ENCODE measurements at regions of chr16 and their contacts with region 1.

Region 1: GRCh38 chr16:2867987-2868789 is 10.2 kb upstream of the PRSS22 start:
- DNase-seq: peak; percentile 93
- H3K4me3 ChIP-seq: peak overlapping the region in 2 of 3 experiments; percentile 34 to 45
- H3K27ac ChIP-seq: peak overlapping the region; percentile 81
- H3K4me1 ChIP-seq: peaks cover 5% of the 10 kb centered on the region
- H3K27me3 ChIP-seq: peaks cover 0 to 2% of the 10 kb centered on the region in 2 experiments
- CTCF ChIP-seq: peak; percentile 99
- POLR2A ChIP-seq: peak; percentile 76

Region 2: GRCh38 chr16:2720719-2721633 is 147.2 kb before region 1 on chr16:
- CTCF ChIA-PET with region 1: interaction called, 3 read pairs
- POLR2A ChIA-PET with region 1: no interaction called
- dilution Hi-C with region 1: no loop called
- intact Hi-C with region 1: loop called (anchors 2 kb)
- DNase-seq: peak; percentile 64
- H3K4me3 ChIP-seq: peak overlapping the region; percentile 38 to 62 (median 55)
- H3K27ac ChIP-seq: peak overlapping the region; percentile 41
- H3K4me1 ChIP-seq: peaks cover 4% of the 10 kb centered on the region
- H3K27me3 ChIP-seq: peaks cover 0 to 4% of the 10 kb centered on the region in 2 experiments
- CTCF ChIP-seq: peak; percentile 29 to 61
- POLR2A ChIP-seq: peak; percentile 53

Region 3: GRCh38 chr16:2817340-2818007 is 50.7 kb before region 1 on chr16:
- CTCF ChIA-PET with region 1: no interaction called
- POLR2A ChIA-PET with region 1: no interaction called
- dilution Hi-C with region 1: no loop called
- intact Hi-C with region 1: no loop called
- DNase-seq: no peak
- H3K4me3 ChIP-seq: no peak overlapping the region
- H3K27ac ChIP-seq: no peak overlapping the region
- H3K4me1 ChIP-seq: no peaks in the 10 kb centered on the region
- H3K27me3 ChIP-seq: no peaks in the 10 kb centered on the region
- CTCF ChIP-seq: no peak
- POLR2A ChIP-seq: no peak

Region 4: GRCh38 chr16:2848933-2849725 is 19.1 kb before region 1 on chr16:
- CTCF ChIA-PET with region 1: interaction called, 15 read pairs
- POLR2A ChIA-PET with region 1: no interaction called
- dilution Hi-C with region 1: no loop called
- intact Hi-C with region 1: loop called (anchors 1 kb)
- DNase-seq: no peak
- H3K4me3 ChIP-seq: no peak overlapping the region
- H3K27ac ChIP-seq: no peak overlapping the region
- H3K4me1 ChIP-seq: no peaks in the 10 kb centered on the region
- H3K27me3 ChIP-seq: peaks cover 0 to 2% of the 10 kb centered on the region in 2 experiments
- CTCF ChIP-seq: no peak
- POLR2A ChIP-seq: no peak

Region 5: DNA sequence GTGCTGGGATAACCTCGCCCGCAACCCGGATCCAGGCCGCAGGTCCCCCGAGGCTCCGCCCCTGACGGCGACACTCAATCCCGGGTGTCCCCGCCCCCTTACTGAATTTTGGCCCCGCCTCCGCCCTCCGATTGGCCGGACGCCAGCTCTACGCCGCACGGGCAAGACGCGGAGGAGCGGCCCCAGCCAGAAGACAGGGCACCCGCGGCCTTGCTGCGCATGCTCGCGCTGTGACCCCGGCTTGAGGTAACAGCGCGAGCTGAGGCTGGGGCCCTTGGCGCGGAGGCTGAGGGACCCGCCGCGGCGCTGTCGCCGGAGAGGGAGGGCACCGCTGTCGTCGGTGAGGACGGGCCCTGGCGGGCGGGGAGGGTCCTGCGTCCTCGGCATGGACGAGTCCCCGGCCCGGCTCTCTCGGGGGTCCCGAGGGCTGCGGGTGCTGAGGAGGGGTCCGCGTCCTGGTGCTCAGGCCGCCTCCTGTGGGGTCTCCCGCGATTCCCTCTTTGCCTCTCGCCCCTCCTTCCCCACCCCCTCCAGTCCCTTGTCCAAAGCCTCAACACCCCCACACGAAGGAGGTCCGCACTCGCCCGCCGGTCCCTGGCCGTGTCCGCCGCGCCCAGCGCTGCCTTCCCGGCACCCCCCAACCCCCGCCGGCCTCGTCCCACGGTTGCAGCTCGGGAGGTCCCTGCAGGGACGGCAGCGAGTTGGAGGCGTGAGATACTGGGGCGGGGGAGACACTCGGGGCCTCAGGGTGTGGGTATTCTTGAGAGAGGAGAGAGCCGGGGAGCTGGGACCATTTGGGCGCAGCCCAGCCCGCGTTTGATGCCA is 15.1 kb after region 1 on chr16 and contains the start of gene FLYWCH2:
- CTCF ChIA-PET with region 1: interaction called, 11 read pairs
- POLR2A ChIA-PET with region 1: interaction called, 3 read pairs
- dilution Hi-C with region 1: no loop called
- intact Hi-C with region 1: no loop called
- DNase-seq: peak; percentile 99
- H3K4me3 ChIP-seq: peak within 1 kb of the TSS; percentile 42 to 91 (median 63)
- H3K27ac ChIP-seq: peak within 1 kb of the TSS; percentile 49
- H3K4me1 ChIP-seq: peaks cover 7% of the 10 kb centered on the region
- H3K27me3 ChIP-seq: no peaks in the 10 kb centered on the region
- CTCF ChIP-seq: no peak
- POLR2A ChIP-seq: peak; percentile 83
- total RNA-seq, gene FLYWCH2: 18.3 and 24.1 TPM in 2 replicates

Region 6: GRCh38 chr16:2919511-2920255 is 51.5 kb after region 1 on chr16:
- CTCF ChIA-PET with region 1: interaction called, 12 read pairs
- POLR2A ChIA-PET with region 1: no interaction called
- dilution Hi-C with region 1: no loop called
- intact Hi-C with region 1: no loop called
- DNase-seq: peak; percentile 74
- H3K4me3 ChIP-seq: no peak overlapping the region
- H3K27ac ChIP-seq: no peak overlapping the region
- H3K4me1 ChIP-seq: peaks cover 16% of the 10 kb centered on the region
- H3K27me3 ChIP-seq: no peaks in the 10 kb centered on the region
- CTCF ChIP-seq: peak; percentile 64 to 80
- POLR2A ChIP-seq: no peak

Region 7: GRCh38 chr16:3457434-3458252 is 589.5 kb after region 1 on chr16:
- CTCF ChIA-PET with region 1: no interaction called
- POLR2A ChIA-PET with region 1: no interaction called
- dilution Hi-C with region 1: no loop called
- intact Hi-C with region 1: no loop called
- DNase-seq: peak; percentile 88
- H3K4me3 ChIP-seq: peak overlapping the region; percentile 44 to 62 (median 47)
- H3K27ac ChIP-seq: peak overlapping the region; percentile 77
- H3K4me1 ChIP-seq: peaks cover 27% of the 10 kb centered on the region
- H3K27me3 ChIP-seq: no peaks in the 10 kb centered on the region
- CTCF ChIP-seq: peak; percentile 38 to 64
- POLR2A ChIP-seq: peak; percentile 77

Measured in endothelial cell of umbilical vein (primary cell).